ENCODE measurements at regions of chr18 and their contacts with region 1.

Region 1: GRCh38 chr18:36296650-36297416 is 680 bp upstream of the FHOD3 start:
- DNase-seq: no peak
- ATAC-seq: peak; percentile 49
- H3K4me3 ChIP-seq: peak overlapping the region; percentile 69
- H3K27ac ChIP-seq: no peak overlapping the region
- H3K4me1 ChIP-seq: no peaks in the 10 kb centered on the region
- H3K27me3 ChIP-seq: peaks cover 0 to 4% of the 10 kb centered on the region in 2 experiments; a peak in 1 of 4 replicates
- CTCF ChIP-seq: peak; percentile 17 to 56 (median 34); a peak in 4 of 6 replicates
- EP300 ChIP-seq: no peak
- POLR2A ChIP-seq: no peak
- RAD21 ChIP-seq: peak; percentile 40; the same call in 1 of the 2 replicates

Region 2: DNA sequence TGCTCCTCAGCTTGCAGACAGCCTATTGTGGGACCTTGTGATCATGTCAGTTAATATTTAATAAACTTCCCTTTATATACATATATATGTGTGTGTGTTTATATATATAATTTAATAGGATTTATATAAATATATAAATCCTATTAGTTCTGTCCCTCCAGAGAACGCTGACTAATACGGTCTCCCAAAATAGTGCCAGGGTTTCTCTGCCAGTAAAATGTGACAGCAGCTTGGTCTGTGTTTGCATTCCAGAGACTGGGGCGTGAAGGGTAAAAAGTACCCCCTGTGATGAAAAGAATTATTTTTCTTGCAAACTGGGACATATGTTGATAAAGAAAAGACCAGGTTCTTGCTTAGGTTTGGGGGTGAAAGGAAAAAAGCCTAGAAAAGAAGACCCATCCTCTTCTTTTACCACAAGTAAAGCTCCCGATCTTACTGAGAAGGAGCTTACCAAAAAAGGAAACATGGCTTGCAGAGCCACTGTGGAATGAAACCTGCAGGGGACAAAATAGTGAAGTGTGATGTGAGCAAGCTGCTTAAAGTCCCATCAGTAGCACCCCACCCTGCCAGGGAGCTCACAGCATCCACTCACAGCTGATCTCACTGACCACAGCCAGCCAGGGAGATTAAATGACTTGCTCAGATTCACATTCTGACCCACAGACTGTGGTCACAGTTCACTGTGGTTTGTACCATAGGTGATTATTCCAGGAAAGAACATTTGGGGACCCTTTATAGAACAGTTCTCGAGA is 435.3 kb before region 1 on chr18:
- CTCF ChIA-PET with region 1: no interaction called
- POLR2A ChIA-PET with region 1: no interaction called
- RAD21 ChIA-PET with region 1: no interaction called
- SMC1A ChIA-PET with region 1: no interaction called
- in situ Hi-C with region 1: no loop called
- intact Hi-C with region 1: no loop called
- DNase-seq: peak; percentile 33
- ATAC-seq: peak; percentile 89
- H3K4me3 ChIP-seq: no peak overlapping the region
- H3K27ac ChIP-seq: no peak overlapping the region
- H3K4me1 ChIP-seq: no peaks in the 10 kb centered on the region
- H3K27me3 ChIP-seq: no peaks in the 10 kb centered on the region
- CTCF ChIP-seq: no peak
- EP300 ChIP-seq: no peak
- POLR2A ChIP-seq: no peak
- RAD21 ChIP-seq: no peak

Region 3: DNA sequence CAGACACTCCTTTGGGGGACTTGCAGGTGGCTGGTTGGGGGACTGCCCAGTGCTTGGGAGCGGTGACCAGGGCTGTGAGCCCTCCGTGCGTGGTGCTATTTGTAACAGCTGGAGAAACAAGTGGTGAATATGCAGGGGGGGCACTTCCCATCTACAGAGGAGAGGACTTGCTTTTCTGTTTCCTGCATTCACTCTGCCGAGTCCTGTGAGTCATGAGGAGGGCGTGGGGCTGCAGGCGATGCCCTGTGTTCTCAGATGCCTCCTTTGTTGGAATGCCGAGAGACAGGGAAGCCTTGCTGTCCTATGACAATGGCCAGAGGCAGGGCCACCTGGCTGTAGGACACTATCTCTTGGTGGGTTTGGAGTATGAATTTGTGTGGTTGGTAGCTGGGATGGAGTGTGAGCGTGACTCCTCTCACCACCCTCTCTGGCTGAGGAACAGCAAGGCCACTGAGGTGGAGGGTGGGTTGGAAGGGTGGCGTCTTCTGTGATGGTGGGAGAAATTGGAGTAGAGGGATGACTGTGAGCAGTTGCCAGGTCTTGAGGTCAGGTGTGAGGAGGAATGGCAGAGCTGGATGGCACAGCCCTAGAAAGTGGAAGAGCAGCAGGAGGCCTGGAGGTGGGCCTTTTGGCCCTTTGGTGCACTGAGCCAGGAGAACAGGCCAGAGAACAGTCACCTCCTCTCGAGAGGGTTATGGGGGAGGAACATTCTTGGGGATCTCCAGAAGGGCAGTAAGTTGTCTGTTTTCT is 25.0 kb after region 1 on chr18:
- CTCF ChIA-PET with region 1: interaction called, 7 read pairs
- POLR2A ChIA-PET with region 1: interaction called, 11 read pairs
- RAD21 ChIA-PET with region 1: interaction called, 126 read pairs
- SMC1A ChIA-PET with region 1: interaction called, 125 read pairs
- in situ Hi-C with region 1: no loop called
- intact Hi-C with region 1: no loop called
- DNase-seq: no peak
- ATAC-seq: peak; percentile 60
- H3K4me3 ChIP-seq: no peak overlapping the region
- H3K27ac ChIP-seq: no peak overlapping the region
- H3K4me1 ChIP-seq: peaks cover 3% of the 10 kb centered on the region; the same call in 1 of the 2 replicates
- H3K27me3 ChIP-seq: peaks cover 0 to 4% of the 10 kb centered on the region in 2 experiments; a peak in 1 of 4 replicates
- CTCF ChIP-seq: no peak
- EP300 ChIP-seq: no peak
- POLR2A ChIP-seq: no peak
- RAD21 ChIP-seq: no peak

Region 4: DNA sequence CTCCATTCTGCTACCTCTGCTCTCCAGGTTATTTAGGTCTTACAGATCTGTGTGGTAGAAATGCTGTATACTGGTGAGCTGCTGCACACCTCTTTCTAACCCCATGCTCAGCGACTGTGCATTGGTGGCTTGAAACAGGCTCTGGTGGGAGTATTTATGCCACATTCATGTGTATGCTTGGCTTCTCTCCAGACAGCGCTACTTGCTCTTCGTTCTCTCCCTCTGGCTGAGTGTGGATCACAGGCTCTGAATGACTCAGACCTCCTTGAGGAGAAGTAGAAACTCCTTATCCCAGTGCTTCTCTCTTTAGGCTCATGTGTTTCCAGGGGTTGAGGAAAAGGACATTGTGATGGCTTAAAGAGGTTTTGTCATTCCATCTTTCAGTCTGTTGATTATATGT is 55.6 kb after region 1 on chr18:
- CTCF ChIA-PET with region 1: no interaction called
- POLR2A ChIA-PET with region 1: interaction called, 6 read pairs
- RAD21 ChIA-PET with region 1: interaction called, 48 read pairs
- SMC1A ChIA-PET with region 1: interaction called, 60 read pairs
- in situ Hi-C with region 1: no loop called
- intact Hi-C with region 1: no loop called
- DNase-seq: no peak
- ATAC-seq: no peak
- H3K4me3 ChIP-seq: no peak overlapping the region
- H3K27ac ChIP-seq: no peak overlapping the region
- H3K4me1 ChIP-seq: peaks cover 5% of the 10 kb centered on the region; the same call in 1 of the 2 replicates
- H3K27me3 ChIP-seq: no peaks in the 10 kb centered on the region
- CTCF ChIP-seq: no peak
- EP300 ChIP-seq: no peak
- POLR2A ChIP-seq: no peak
- RAD21 ChIP-seq: no peak

Region 5: GRCh38 chr18:36411745-36412168 is 114.9 kb after region 1 on chr18:
- CTCF ChIA-PET with region 1: interaction called, 13 read pairs
- POLR2A ChIA-PET with region 1: no interaction called
- RAD21 ChIA-PET with region 1: interaction called, 27 read pairs
- SMC1A ChIA-PET with region 1: interaction called, 11 read pairs
- in situ Hi-C with region 1: no loop called
- intact Hi-C with region 1: loop called (anchors 1 kb)
- DNase-seq: no peak
- ATAC-seq: peak; percentile 79
- H3K4me3 ChIP-seq: no peak overlapping the region
- H3K27ac ChIP-seq: no peak overlapping the region
- H3K4me1 ChIP-seq: no peaks in the 10 kb centered on the region
- H3K27me3 ChIP-seq: no peaks in the 10 kb centered on the region
- CTCF ChIP-seq: peak; percentile 25 to 33 (median 31); a peak in 3 of 6 replicates
- EP300 ChIP-seq: no peak
- POLR2A ChIP-seq: no peak
- RAD21 ChIP-seq: peak; percentile 28; the same call in 1 of the 2 replicates

Measured in GM12878 (cell line).